PC-9 (cell line): ENCODE measurements at regions of chr14 and their contacts with region 1.

Region 1: GRCh38 chr14:69489495-69489894 is 5.0 kb downstream of the PLEKHD1 start:
- DNase-seq: no peak
- H3K4me3 ChIP-seq: no peak overlapping the region
- H3K27ac ChIP-seq: no peak overlapping the region
- H3K4me1 ChIP-seq: no peaks in the 10 kb centered on the region
- H3K27me3 ChIP-seq: peaks cover 31% of the 10 kb centered on the region
- CTCF ChIP-seq: no peak

Region 2: DNA sequence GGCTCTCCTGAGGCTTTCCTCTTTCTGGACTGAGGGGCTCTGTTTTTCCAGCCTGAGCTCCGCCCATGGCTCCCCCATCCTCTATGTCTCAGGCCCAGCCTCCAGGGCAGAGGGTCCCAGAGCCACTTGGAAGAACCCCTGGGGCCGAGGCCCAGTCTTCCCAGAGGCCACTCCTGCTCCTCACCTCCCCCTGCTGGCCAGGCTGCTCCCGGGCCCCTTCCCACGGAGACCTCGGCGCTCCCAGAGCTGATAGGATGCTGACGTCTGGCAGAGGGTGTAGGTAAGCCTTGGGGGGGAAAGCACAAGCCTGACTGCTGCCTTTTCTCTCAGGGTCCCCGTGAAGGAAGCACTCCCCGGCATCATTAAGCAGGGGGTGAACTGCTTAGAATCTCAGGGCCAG is 142.8 kb before region 1 on chr14:
- CTCF ChIA-PET with region 1: no interaction called
- POLR2A ChIA-PET with region 1: interaction called, 10 read pairs
- intact Hi-C with region 1: no loop called
- DNase-seq: peak in 1 of 2 experiments; percentile 19
- H3K4me3 ChIP-seq: no peak overlapping the region
- H3K27ac ChIP-seq: no peak overlapping the region
- H3K4me1 ChIP-seq: no peaks in the 10 kb centered on the region
- H3K27me3 ChIP-seq: 0 out of 2 replicates have a peak, but pooled peaks cover 7% of the 10 kb centered on the region
- CTCF ChIP-seq: peak; percentile 69

Region 3: GRCh38 chr14:69535230-69535848 is 45.8 kb after region 1 on chr14:
- CTCF ChIA-PET with region 1: no interaction called
- POLR2A ChIA-PET with region 1: no interaction called
- intact Hi-C with region 1: no loop called
- DNase-seq: peak in 1 of 2 experiments; percentile 34
- H3K4me3 ChIP-seq: no peak overlapping the region
- H3K27ac ChIP-seq: no peak overlapping the region
- H3K4me1 ChIP-seq: peaks cover 33% of the 10 kb centered on the region
- H3K27me3 ChIP-seq: no peaks in the 10 kb centered on the region
- CTCF ChIP-seq: peak; percentile 74

Region 4: GRCh38 chr14:70771781-70772212 is 1282.3 kb after region 1 on chr14:
- CTCF ChIA-PET with region 1: no interaction called
- POLR2A ChIA-PET with region 1: interaction called, 17 read pairs
- intact Hi-C with region 1: no loop called
- DNase-seq: no peak
- H3K4me3 ChIP-seq: no peak overlapping the region
- H3K27ac ChIP-seq: no peak overlapping the region
- H3K4me1 ChIP-seq: peaks cover 13% of the 10 kb centered on the region; the same call in 1 of the 2 replicates
- H3K27me3 ChIP-seq: no peaks in the 10 kb centered on the region
- CTCF ChIP-seq: no peak